ENCODE measurements at regions of chr15 and their contacts with region 1.

Region 1: GRCh38 chr15:88638626-88639372 is at the start of gene ISG20:
- DNase-seq: peak; percentile 94
- H3K4me3 ChIP-seq: peak within 1 kb of the TSS; percentile 33; the same call in 1 of the 2 replicates
- H3K27ac ChIP-seq: peak within 1 kb of the TSS; percentile 79
- H3K4me1 ChIP-seq: peaks cover 29% of the 10 kb centered on the region
- H3K27me3 ChIP-seq: no peaks in the 10 kb centered on the region
- CTCF ChIP-seq: no peak; the same call in 1 of the 2 replicates
- total RNA-seq, gene ISG20: 2.5 and 5.2 TPM in 2 replicates

Region 2: GRCh38 chr15:88440021-88440420 is 198.8 kb before region 1 on chr15:
- CTCF ChIA-PET with region 1: no interaction called
- POLR2A ChIA-PET with region 1: no interaction called
- intact Hi-C with region 1: no loop called
- DNase-seq: peak in 1 of 2 experiments; percentile 67
- H3K4me3 ChIP-seq: no peak overlapping the region
- H3K27ac ChIP-seq: no peak overlapping the region
- H3K4me1 ChIP-seq: no peaks in the 10 kb centered on the region
- H3K27me3 ChIP-seq: peaks cover 35% of the 10 kb centered on the region; the same call in 1 of the 2 replicates
- CTCF ChIP-seq: no peak

Region 3: DNA sequence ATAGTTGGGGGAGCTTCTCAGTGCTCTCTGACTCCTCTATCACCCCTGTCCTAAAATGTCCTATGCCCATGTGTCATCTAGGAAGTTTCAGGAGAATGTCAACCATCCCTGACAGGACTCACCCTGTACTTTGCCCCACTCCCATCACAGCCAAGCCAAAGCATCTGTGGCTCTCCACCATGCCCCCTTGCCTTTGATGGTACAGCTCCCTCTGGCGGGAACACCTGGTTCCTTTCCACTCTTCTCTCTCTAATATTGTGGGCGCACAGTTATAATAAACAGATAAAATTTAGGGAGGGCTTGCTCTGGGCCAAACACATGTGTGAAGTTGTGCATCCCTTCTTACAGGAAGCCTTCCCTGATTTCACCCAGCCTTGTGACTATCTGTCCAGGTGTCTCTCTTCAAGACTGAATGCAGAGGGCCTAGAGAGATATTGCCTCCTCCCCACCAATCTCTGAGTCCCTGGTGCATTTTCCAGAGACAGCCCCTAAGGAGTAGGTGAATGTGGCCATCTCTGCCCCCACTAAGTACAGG is 62.8 kb after region 1 on chr15:
- CTCF ChIA-PET with region 1: no interaction called
- POLR2A ChIA-PET with region 1: no interaction called
- intact Hi-C with region 1: loop called (anchors 1 kb)
- DNase-seq: peak in 1 of 2 experiments; percentile 14
- H3K4me3 ChIP-seq: no peak overlapping the region
- H3K27ac ChIP-seq: no peak overlapping the region
- H3K4me1 ChIP-seq: no peaks in the 10 kb centered on the region
- H3K27me3 ChIP-seq: peaks cover 71% of the 10 kb centered on the region
- CTCF ChIP-seq: peak; percentile 59